HCT116 (cell line): ENCODE measurements at regions of chr9 and their contacts with region 1.

Region 1: GRCh38 chr9:83965350-83966208 is 14.4 kb downstream of the HNRNPK start:
- DNase-seq: no peak
- ATAC-seq: peak; percentile 39
- H3K4me3 ChIP-seq: no peak overlapping the region
- H3K27ac ChIP-seq: no peak overlapping the region
- H3K4me1 ChIP-seq: peaks cover 5 to 6% of the 10 kb centered on the region in 2 experiments; a peak in 3 of 4 replicates
- H3K27me3 ChIP-seq: no peaks in the 10 kb centered on the region
- CTCF ChIP-seq: no peak
- POLR2A ChIP-seq: no peak
- RAD21 ChIP-seq: no peak

Region 2: DNA sequence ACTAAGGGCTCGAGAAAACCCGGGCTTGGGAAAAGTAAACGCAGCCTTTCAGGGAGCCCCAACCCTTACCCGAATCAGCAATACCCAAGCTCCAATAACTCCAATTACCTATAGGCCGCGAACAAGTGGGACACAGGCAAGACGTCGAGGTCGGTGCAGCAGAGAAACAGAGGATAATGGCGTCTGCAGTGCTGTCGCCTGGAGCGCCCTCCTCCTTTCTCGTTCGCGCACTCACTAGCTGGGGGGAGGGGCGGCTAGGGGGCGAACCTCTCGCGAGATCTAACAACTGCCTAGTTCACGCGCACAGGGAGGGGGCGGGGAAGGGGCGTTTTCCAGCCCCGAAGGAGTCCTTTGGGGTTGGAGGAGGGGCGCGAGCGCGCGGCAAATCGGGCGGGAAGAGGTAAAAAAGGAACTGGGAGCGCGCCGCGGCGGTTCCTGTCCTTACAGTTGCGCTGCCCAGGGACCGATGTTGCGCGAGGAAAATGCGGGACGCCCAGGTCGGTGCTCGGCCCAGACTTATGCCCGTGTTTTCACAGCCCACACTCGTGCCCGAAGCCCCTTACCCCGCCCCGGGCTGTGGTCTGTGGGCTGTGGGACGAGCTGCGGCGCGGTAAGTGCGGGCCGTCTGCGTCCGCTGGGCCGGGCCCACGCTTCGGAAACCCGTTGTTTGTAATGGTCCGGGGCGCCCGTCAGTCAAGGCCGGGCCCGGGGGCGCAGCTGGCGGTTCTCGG is 15.0 kb after region 1 on chr9 and contains the start of gene RMI1:
- CTCF ChIA-PET with region 1: no interaction called
- POLR2A ChIA-PET with region 1: interaction called, 10 read pairs
- RAD21 ChIA-PET with region 1: no interaction called
- intact Hi-C with region 1: loop called (anchors 1 kb)
- DNase-seq: peak; percentile 95
- ATAC-seq: peak; percentile 82
- H3K4me3 ChIP-seq: peak within 1 kb of the TSS; percentile 77 to 94
- H3K27ac ChIP-seq: peak within 1 kb of the TSS; percentile 96
- H3K4me1 ChIP-seq: peaks cover 9 to 24% of the 10 kb centered on the region in 2 experiments; a peak in 3 of 4 replicates
- H3K27me3 ChIP-seq: no peaks in the 10 kb centered on the region
- CTCF ChIP-seq: 0 out of 6 replicates have a peak, but pooled peaks of 1 of the 3 experiments have one; percentile 7
- POLR2A ChIP-seq: peak; percentile 80
- RAD21 ChIP-seq: no peak; the same call in none of the 2 replicates
- total RNA-seq, gene RMI1: 26.8 TPM